ENCODE measurements at regions of chr13 and their contacts with region 1.

Region 1: DNA sequence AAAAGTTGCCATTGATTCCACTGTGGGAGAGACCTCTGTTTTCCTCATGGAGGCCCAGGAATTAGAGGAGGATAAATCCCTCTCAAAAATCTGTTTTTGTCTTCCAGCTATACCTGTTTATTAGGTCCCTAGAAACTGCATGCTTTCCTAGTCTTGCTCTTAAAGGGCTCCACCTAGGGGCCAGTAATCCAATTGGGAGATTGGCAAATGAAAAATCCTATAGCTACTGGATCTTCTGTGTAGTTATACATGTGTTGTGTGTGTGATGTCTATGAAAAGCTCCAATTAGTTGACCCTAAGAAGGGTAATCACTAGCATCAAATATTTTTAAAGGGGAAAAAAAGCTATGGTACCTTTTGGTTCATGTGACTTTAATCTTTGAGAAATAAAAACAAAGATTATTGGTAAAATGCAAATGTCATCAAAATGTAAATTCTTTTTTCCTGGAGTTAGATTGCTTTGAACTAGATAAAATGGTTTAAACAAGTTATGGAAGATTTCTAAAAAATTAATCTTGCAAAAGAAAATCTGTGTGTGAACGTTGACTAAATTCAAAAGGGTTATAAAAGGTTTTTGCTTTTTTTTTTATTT is 63.4 kb upstream of the C1QTNF9B start:
- DNase-seq: no peak
- H3K4me3 Mint-ChIP-seq: no peak overlapping the region
- H3K27ac Mint-ChIP-seq: no peak overlapping the region
- H3K4me1 Mint-ChIP-seq: peaks cover 59% of the 10 kb centered on the region
- H3K27me3 Mint-ChIP-seq: peaks cover 7% of the 10 kb centered on the region

Region 2: GRCh38 chr13:23741879-23742510 is 218.7 kb before region 1 on chr13:
- intact Hi-C with region 1: loop called (anchors 10 kb)
- DNase-seq: no peak
- H3K4me3 Mint-ChIP-seq: no peak overlapping the region
- H3K27ac Mint-ChIP-seq: no peak overlapping the region
- H3K4me1 Mint-ChIP-seq: peaks cover 27% of the 10 kb centered on the region
- H3K27me3 Mint-ChIP-seq: peaks cover 10% of the 10 kb centered on the region

Region 3: DNA sequence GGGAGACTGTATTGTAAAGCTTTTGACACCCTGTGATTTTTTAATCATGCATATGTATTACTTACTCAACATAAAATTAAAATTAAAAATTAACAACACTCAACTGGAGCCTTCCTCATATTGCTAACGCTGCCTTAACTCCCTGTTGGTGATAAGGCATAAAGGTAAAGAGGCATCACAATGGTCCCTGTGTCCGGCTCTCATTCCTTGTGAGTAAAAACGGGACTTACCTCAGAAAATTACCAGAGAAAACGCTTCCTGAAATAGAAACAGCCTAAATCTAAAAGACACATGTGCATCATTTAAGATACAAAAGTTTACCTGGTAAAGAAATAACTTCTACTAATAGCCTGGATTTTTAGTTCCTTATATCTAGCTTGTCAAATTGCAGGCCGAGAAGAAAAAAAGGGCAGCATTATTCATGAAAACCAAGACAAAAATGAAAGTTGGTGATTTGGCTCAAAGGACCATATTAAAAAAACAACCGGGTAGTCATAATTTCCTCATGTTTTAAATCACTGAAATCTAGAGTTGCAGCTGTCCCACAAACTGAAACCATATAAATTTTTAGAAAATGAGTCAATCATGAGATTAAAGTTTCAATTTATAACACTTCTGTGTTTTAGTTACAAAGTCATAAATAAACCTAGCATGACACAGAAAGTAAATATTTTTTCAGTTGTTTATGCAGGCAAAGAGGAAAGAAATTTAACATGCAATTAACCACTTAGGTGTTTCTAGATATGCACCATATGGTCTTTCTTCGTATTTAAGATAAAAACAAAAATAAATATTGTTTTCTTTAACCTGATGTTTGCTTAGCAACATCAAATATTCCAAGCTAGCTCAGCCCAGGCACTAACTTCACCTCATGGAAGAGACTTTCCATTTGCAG is 166.1 kb before region 1 on chr13:
- intact Hi-C with region 1: loop called (anchors 10 kb)
- DNase-seq: no peak
- H3K4me3 Mint-ChIP-seq: no peak overlapping the region
- H3K27ac Mint-ChIP-seq: no peak overlapping the region
- H3K4me1 Mint-ChIP-seq: peaks cover under 1% of the 10 kb centered on the region
- H3K27me3 Mint-ChIP-seq: no peaks in the 10 kb centered on the region

Region 4: DNA sequence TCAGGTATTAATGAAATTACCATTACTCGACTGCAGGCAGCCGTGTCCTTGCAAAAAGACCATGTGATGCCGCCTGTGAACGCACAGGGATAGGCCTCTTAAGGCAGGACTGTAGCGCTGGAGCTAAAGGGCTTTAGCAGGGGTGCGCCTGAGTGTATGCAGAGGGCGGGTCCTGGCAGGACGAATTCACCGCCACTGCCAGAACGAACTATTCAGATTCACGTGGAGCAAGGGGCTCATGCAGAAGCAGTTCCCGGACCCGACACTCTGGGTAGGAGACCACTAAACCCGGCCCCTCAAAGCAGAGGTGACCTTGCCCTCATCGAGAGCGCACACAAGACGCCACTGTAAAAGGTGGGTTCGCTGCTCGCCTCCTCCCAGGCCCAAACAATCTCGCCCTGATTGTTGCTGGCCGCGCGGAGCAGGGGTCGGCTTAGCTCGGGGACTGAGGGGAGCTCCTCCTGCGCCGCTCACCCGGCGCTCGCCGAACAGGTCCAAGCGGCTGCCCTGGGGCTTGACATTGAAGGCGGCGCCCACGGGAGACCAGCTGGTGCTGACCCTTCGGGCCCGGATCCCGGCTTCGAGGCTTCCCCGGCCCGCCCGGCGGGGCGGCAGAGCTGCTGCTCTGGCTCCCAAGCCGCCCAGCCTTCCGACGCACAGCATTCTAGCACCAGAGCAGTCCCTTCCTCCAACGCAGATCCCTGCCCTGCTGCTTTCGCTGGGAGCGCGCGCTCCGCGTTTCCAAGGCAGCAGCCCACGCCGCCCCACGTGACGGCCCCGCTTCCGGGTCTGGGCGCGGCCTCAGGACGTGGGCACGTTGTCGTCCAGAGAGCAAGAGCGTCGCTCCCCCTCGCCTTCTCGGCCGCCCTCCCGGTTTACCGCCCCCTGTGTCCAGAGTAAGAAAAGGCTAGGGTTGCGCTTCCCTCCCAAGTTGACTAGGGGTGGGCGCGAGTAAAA is 71.7 kb before region 1 on chr13 and contains the start of gene MIPEP:
- intact Hi-C with region 1: loop called (anchors 1 kb)
- DNase-seq: peak; percentile 86
- H3K4me3 Mint-ChIP-seq: peak within 1 kb of the TSS; percentile 89
- H3K27ac Mint-ChIP-seq: peak within 1 kb of the TSS; percentile 90
- H3K4me1 Mint-ChIP-seq: peaks cover 31% of the 10 kb centered on the region
- H3K27me3 Mint-ChIP-seq: no peaks in the 10 kb centered on the region
- total RNA-seq, gene MIPEP: 7.3 and 7.8 TPM in 2 replicates

Region 5: GRCh38 chr13:23921451-23921888 is 39.2 kb before region 1 on chr13:
- intact Hi-C with region 1: loop called (anchors 1 kb)
- DNase-seq: peak; percentile 24
- H3K4me3 Mint-ChIP-seq: no peak overlapping the region
- H3K27ac Mint-ChIP-seq: no peak overlapping the region
- H3K4me1 Mint-ChIP-seq: peaks cover 9% of the 10 kb centered on the region
- H3K27me3 Mint-ChIP-seq: peaks cover 39% of the 10 kb centered on the region

Region 6: GRCh38 chr13:23980160-23980551 is 19.5 kb after region 1 on chr13:
- intact Hi-C with region 1: loop called (anchors 2 kb)
- DNase-seq: peak; percentile 89
- H3K4me3 Mint-ChIP-seq: peak overlapping the region; percentile 90
- H3K27ac Mint-ChIP-seq: peak overlapping the region; percentile 79
- H3K4me1 Mint-ChIP-seq: peaks cover 18% of the 10 kb centered on the region
- H3K27me3 Mint-ChIP-seq: peaks cover 53% of the 10 kb centered on the region

Region 7: DNA sequence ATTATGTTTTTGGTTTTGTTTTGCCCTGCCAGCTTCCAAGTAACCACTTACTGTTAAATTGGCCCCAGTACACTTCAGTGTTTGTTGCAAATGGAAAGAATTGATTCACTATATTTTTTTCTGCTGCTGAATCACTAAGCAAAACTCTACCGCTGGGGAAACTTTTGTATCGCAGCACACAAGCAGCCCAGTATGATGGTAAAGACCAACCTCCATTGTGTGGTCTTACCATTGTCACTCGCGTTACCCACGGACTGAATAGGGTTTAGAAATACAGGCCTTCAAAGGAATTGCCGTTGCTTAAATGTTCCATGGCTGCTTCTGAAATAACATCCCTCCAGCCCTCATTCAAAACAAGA is 207.7 kb after region 1 on chr13:
- intact Hi-C with region 1: loop called (anchors 5 kb)
- DNase-seq: no peak
- H3K4me3 Mint-ChIP-seq: no peak overlapping the region
- H3K27ac Mint-ChIP-seq: peak overlapping the region; percentile 77
- H3K4me1 Mint-ChIP-seq: peaks cover 55% of the 10 kb centered on the region
- H3K27me3 Mint-ChIP-seq: peaks cover 4% of the 10 kb centered on the region